ENCODE measurements at regions of chr12 and their contacts with region 1.

Region 1: DNA sequence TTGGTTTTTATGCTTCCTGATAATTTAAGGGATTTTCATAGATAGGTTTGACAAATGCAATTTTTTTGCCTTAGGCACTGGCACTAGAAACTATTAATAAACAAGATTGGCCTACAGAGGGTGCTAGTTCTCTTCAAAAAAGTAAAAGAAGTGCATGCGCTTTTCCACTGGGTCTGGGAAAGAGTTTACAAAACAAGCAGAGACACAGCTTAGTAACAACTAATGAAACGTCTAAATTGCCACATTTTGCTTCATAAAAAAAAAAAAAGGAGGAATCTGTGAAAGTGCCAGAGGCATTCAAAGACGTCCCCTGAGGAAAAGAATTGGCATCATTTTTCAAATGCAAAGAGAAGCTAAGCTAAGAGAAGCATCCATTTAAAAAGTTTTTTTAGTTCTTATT is 58.3 kb upstream of the EEA1 start:
- DNase-seq: no peak
- H3K4me3 Mint-ChIP-seq: no peak overlapping the region
- H3K27ac Mint-ChIP-seq: peak overlapping the region; percentile 66
- H3K4me1 Mint-ChIP-seq: peaks cover 33% of the 10 kb centered on the region
- H3K27me3 Mint-ChIP-seq: no peaks in the 10 kb centered on the region

Region 2: DNA sequence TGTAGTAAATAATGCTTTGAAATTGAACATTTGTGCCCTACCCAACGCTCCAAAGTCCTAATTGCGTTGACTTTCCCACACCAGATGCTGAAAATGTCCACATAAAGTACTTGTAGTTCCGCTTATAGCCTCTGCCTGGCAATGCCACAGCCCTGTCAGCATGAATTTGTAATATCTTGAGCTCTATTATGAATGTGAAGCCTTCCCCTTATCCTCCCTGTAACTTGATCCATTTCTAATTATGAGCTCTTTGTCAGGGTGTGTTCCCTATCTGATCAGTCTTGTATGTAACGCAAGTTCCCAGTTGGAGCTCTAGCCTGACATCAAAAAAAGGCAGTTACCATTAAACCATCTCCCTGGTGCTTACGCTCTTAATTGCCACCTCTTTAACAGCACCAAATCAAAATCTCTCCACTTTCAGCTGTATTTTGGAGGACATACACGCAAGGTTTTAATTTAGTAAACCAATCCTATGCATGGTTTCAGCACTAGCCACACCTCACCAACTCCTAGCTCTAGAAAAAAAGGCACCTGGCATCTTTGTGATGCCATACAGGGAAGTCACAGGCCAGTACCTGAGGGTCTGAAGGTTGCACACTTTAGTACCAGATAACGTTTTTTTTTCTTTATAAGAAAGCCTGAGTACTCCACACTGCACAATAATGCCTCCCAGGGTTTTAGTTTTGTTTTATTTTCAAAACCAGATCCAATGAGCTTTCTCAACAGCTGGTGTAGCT is 127.5 kb before region 1 on chr12:
- CTCF ChIA-PET with region 1: no interaction called
- POLR2A ChIA-PET with region 1: no interaction called
- intact Hi-C with region 1: no loop called
- DNase-seq: no peak
- H3K4me3 Mint-ChIP-seq: no peak overlapping the region
- H3K27ac Mint-ChIP-seq: no peak overlapping the region
- H3K4me1 Mint-ChIP-seq: peaks cover 3% of the 10 kb centered on the region
- H3K27me3 Mint-ChIP-seq: no peaks in the 10 kb centered on the region

Region 3: DNA sequence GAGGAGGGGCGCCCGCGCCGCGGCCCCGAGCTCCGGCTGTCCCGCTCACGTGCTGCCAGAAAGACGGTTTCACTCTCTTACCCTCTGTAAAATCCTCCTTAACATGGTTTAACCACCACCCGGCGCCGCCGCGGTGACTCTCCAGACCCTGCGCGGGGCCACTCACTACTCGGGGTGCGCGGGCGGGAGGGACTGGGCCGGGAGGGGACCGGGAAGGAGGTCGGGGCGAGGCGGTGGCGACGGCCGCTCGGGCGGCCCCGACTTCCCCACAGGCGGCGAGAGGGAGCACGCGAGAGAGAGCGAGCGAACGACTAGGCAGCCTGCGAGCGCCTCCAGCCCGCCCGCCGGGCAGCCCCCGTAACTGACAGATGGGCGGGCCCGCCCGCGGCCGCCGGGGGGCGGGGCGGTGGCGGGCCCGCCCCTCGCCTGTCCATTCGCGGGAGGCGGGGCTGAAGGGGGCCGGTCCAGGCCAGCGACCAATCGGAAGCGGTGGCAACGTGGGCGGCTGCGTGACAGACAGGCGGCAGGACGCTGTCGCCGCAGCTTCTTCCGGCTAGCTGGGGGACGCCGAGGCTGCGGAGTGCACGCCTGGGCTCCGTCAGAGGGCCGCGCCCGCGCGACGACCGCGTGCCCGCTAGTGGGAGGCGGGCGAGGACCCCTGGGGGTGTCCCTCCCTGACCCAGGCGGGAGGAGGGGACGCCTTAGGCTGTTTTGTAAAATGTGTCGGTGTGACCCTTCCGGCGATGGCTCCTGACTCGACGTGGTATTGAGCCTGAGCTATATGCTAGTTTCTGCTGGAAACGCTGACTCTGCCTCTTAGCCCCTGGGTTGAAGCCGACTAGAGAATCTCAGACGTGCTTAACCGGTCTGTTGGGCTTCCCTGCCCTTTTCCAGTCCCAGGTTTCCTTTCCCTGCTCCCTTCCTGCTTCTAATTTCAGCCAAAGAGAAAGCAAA is 58.1 kb before region 1 on chr12 and contains the start of gene EEA1:
- CTCF ChIA-PET with region 1: interaction called, 14 read pairs
- POLR2A ChIA-PET with region 1: interaction called, 9 read pairs
- intact Hi-C with region 1: loop called (anchors 1 kb)
- DNase-seq: peak; percentile 98
- H3K4me3 Mint-ChIP-seq: peak within 1 kb of the TSS; percentile 85
- H3K27ac Mint-ChIP-seq: peak within 1 kb of the TSS; percentile 95
- H3K4me1 Mint-ChIP-seq: peaks cover 32% of the 10 kb centered on the region
- H3K27me3 Mint-ChIP-seq: no peaks in the 10 kb centered on the region
- total RNA-seq, gene EEA1: 17.5 to 17.7 TPM

Region 4: DNA sequence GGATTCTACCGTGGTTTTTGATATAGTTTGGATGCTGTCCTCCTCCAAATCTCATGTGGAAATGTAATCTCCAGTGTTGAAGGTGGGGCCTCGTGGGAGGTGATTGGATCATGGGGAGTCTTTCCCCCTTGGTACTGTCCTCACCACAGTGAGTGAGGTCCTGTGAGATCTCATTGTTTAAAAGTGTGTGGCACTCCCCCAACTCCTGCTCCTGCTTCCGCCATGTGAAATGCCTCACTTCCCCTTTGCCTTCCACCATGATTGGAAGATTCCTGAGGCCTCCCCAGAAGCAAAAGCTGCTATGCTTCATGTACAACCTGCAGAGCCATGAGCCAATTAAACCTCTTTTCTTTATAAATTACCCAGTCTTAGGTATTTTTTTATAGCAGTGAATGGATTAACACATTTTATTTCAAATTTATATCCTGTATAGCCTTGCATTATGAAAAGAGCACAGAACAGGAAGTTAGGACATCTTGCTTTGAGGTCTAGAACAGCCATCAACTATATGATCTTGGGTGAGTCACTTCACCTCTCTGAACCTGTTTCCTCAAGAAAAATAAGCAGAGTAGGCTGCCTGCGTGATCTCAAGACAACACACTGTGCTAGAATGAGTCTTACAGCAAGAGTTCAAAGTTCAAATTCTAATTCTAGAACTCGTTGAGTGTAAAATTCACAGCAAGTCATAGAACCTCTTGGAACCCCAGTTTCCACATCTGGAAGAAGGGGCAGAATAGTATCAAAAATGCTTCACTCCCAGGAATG is 102.6 kb after region 1 on chr12:
- CTCF ChIA-PET with region 1: no interaction called
- POLR2A ChIA-PET with region 1: no interaction called
- intact Hi-C with region 1: loop called (anchors 1 kb)
- DNase-seq: peak; percentile 43
- H3K4me3 Mint-ChIP-seq: no peak overlapping the region
- H3K27ac Mint-ChIP-seq: no peak overlapping the region
- H3K4me1 Mint-ChIP-seq: peaks cover 15% of the 10 kb centered on the region
- H3K27me3 Mint-ChIP-seq: no peaks in the 10 kb centered on the region

Region 5: GRCh38 chr12:93167841-93168492 is 180.6 kb after region 1 on chr12:
- CTCF ChIA-PET with region 1: no interaction called
- POLR2A ChIA-PET with region 1: no interaction called
- intact Hi-C with region 1: loop called (anchors 5 kb)
- DNase-seq: peak; percentile 67
- H3K4me3 Mint-ChIP-seq: peak overlapping the region; percentile 61
- H3K27ac Mint-ChIP-seq: no peak overlapping the region
- H3K4me1 Mint-ChIP-seq: peaks cover 15% of the 10 kb centered on the region
- H3K27me3 Mint-ChIP-seq: peaks cover 10% of the 10 kb centered on the region

Region 6: GRCh38 chr12:93397412-93397811 is 410.1 kb after region 1 on chr12:
- CTCF ChIA-PET with region 1: interaction called, 35 read pairs
- POLR2A ChIA-PET with region 1: no interaction called
- intact Hi-C with region 1: loop called (anchors 2 kb)
- DNase-seq: no peak
- H3K4me3 Mint-ChIP-seq: no peak overlapping the region
- H3K27ac Mint-ChIP-seq: no peak overlapping the region
- H3K4me1 Mint-ChIP-seq: peaks cover 6% of the 10 kb centered on the region
- H3K27me3 Mint-ChIP-seq: no peaks in the 10 kb centered on the region

Region 7: DNA sequence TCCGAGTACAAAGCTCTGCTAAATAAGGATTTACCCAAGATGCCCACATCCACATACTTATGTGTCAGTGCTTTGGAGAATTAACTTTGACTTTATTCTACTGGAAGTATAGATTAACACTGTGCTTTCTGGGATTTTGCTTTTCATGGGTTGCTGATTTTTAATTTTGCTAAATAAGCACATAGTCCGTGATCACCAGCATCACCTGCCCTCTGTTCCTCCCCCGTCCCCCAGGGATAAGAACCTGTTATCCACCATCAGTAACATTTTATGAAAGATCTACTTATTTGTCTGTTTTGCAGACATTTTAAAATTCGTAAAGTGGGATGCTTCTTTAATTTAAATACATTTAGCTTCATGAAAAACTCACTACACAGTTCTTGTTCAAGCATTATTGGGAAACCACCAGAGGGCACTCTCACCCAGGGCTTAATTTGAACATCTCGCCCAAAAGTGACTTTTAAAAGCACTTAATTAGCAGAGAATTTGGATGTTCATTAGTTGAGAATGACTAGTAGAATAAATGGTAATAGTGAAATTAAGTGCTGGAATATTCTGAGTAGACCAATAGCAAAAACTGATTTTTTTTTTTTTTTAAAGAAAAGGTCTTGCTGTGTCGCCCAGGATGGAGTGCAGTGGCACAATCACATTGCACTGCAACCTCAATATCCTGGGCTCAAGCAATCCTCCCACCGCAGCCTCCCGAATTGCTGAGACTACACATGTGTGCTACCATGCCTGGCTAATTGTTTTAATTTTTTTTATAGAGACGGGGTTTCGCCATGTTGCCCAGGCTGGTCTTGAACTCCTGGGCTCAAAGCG is 515.7 kb after region 1 on chr12:
- CTCF ChIA-PET with region 1: interaction called, 13 read pairs
- POLR2A ChIA-PET with region 1: no interaction called
- intact Hi-C with region 1: no loop called
- DNase-seq: peak; percentile 64
- H3K4me3 Mint-ChIP-seq: no peak overlapping the region
- H3K27ac Mint-ChIP-seq: no peak overlapping the region
- H3K4me1 Mint-ChIP-seq: peaks cover 10% of the 10 kb centered on the region
- H3K27me3 Mint-ChIP-seq: no peaks in the 10 kb centered on the region